Naive thymus-derived CD8-positive, alpha-beta T cell (primary cell): ENCODE measurements at regions of chr20 and their contacts with region 1.

Region 1: GRCh38 chr20:35954200-35954906 is at the start of gene SCAND1:
- DNase-seq: peak; percentile 93 to 99 (median 97)
- ATAC-seq: peak; percentile 86
- H3K4me3 Mint-ChIP-seq: peak within 1 kb of the TSS; percentile 89 to 100 (median 99)
- H3K27ac Mint-ChIP-seq: peak within 1 kb of the TSS; percentile 94 to 100 (median 99)
- H3K4me1 Mint-ChIP-seq: peaks cover 6 to 31% (median 26%) of the 10 kb centered on the region in 4 donors
- H3K27me3 Mint-ChIP-seq: no peaks in the 10 kb centered on the region
- polyA plus RNA-seq, gene SCAND1: 156 to 206 (median 176) TPM

Region 2: GRCh38 chr20:35454881-35455609 is 499.3 kb before region 1 on chr20 and contains the start of gene CEP250:
- POLR2A ChIA-PET with region 1: interaction called, 19 read pairs
- DNase-seq: peak; percentile 91 to 98 (median 96)
- ATAC-seq: peak; percentile 93 to 94
- H3K4me3 Mint-ChIP-seq: peak within 1 kb of the TSS; percentile 88 to 98 (median 95)
- H3K27ac Mint-ChIP-seq: peak within 1 kb of the TSS; percentile 87 to 100 (median 98)
- H3K4me1 Mint-ChIP-seq: peaks cover 0 to 33% (median 21%) of the 10 kb centered on the region in 4 donors
- H3K27me3 Mint-ChIP-seq: no peaks in the 10 kb centered on the region
- polyA plus RNA-seq, gene CEP250: 4.5 to 17.5 (median 6.0) TPM

Region 3: GRCh38 chr20:35541783-35542588 is 412.4 kb before region 1 on chr20 and contains the start of gene ERGIC3:
- POLR2A ChIA-PET with region 1: interaction called, 13 read pairs
- DNase-seq: peak; percentile 92 to 98 (median 96)
- ATAC-seq: peak; percentile 96
- H3K4me3 Mint-ChIP-seq: peak within 1 kb of the TSS; percentile 82 to 97 (median 92)
- H3K27ac Mint-ChIP-seq: peak within 1 kb of the TSS; percentile 70 to 96 (median 91)
- H3K4me1 Mint-ChIP-seq: peaks cover 10 to 28% (median 24%) of the 10 kb centered on the region in 4 donors
- H3K27me3 Mint-ChIP-seq: peaks cover 0 to 2% (median 0%) of the 10 kb centered on the region in 5 donors
- polyA plus RNA-seq, gene ERGIC3: 129 to 150 (median 149) TPM

Region 4: GRCh38 chr20:35664544-35665221 is 289.7 kb before region 1 on chr20 and contains the starts of genes CPNE1 and RBM12:
- POLR2A ChIA-PET with region 1: interaction called, 22 read pairs
- DNase-seq: peak; percentile 87 to 97 (median 94)
- ATAC-seq: peak; percentile 77 to 78
- H3K4me3 Mint-ChIP-seq: peak within 1 kb of the TSS; percentile 89 to 98 (median 96)
- H3K27ac Mint-ChIP-seq: peak within 1 kb of the TSS; percentile 96 to 100 (median 99)
- H3K4me1 Mint-ChIP-seq: peaks cover 10 to 55% (median 47%) of the 10 kb centered on the region in 4 donors
- H3K27me3 Mint-ChIP-seq: no peaks in the 10 kb centered on the region
- polyA plus RNA-seq, gene CPNE1: 329 to 392 (median 384) TPM
- polyA plus RNA-seq, gene RBM12: 35.2 to 43.7 (median 39.9) TPM

Region 5: DNA sequence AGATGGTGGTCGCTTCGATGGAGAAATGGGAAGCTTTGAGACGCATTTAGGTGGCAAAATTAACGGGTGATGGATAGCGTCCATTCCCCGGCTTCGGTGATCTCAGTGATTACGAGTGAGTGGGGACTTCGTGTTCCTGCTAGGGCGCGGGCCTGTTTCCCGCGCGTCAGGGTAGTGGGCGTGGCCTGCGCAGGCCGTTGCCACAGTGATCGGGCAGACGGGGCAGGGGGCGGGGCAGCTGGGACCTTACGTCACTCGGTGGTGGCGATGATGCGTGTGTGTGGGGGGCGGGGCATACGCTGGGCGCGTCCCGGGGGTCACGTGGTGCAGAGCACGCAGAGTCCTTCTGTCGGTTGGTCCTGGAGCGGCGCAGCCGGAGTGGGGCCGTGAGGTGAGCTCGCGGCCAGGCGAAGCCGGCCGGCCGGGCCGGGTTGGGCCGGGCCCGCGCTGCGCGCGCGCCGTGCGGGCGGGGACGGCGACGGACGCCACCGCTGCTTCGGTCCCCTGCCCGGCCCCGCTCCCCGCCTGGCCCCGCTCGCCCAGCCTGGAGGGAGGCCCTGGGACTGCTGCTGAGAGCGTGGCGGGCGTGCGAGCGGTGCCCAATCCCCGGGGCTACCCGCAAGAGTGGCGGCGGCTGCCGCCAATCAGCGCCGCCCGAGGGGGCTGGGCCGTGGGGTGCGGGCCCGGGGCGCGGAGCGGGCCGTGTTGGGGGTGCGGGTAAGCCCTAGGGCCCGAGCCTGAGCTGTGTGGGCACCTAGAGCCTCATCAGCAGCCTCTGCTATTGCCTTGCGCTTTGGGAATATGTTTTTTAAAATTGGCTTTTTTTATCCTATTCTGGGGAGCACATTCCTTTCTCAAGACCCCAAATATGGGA is 182.4 kb before region 1 on chr20 and contains the start of gene PHF20:
- POLR2A ChIA-PET with region 1: interaction called, 17 read pairs
- DNase-seq: peak; percentile 99 to 100 (median 100)
- ATAC-seq: peak; percentile 81 to 87
- H3K4me3 Mint-ChIP-seq: peak within 1 kb of the TSS; percentile 84 to 98 (median 93)
- H3K27ac Mint-ChIP-seq: peak within 1 kb of the TSS; percentile 98 to 100 (median 100)
- H3K4me1 Mint-ChIP-seq: peaks cover 45 to 91% (median 75%) of the 10 kb centered on the region in 4 donors
- H3K27me3 Mint-ChIP-seq: no peaks in the 10 kb centered on the region
- polyA plus RNA-seq, gene PHF20: 114 to 135 (median 125) TPM

Region 6: DNA sequence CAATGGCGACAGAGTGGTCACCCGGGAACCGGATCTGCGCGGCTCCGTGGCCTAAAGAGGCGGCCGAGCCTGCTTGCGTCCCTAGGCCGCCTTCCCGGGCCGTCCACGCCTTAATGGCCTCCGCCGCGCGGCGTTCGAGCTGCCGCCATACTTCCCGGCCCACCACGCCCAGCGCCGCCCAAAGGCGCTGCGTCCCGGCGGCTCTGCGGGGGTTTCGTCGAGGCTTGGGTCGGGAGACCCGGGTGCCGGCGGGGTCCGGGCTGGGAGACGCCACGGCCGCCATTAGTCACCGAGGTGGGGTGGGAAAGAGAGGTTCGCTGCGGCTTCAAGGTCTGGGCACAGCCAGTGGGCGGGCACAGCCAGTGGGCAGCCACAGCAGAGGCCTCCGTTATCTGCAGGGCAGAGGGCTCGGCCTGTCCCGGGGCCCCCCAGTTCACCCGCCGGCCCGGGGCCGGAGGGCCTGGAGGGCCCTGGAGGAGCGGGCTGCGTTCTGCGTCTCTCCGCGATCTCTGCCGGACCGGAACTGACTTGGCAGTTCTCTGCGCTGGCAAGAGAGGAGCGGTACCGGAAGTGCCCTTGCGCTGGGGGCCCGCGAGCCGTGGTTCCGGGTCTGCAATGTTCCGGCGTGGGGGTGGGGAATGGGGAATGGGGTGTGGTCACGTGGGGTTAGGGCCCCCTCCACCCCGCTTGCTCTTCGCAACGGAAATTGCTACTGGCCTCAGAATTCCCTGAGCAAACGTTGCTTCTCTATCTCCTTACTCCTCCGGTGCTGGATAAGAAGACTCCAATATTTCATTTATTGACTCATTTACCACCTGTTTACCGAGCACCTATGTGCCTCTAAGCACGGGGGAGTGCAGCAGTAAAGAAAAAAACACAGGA is 96.3 kb after region 1 on chr20:
- POLR2A ChIA-PET with region 1: interaction called, 19 read pairs
- DNase-seq: peak; percentile 74 to 94 (median 83)
- ATAC-seq: peak; percentile 94 to 97
- H3K4me3 Mint-ChIP-seq: peak overlapping the region; percentile 87 to 97 (median 92)
- H3K27ac Mint-ChIP-seq: peak overlapping the region; percentile 83 to 97 (median 93)
- H3K4me1 Mint-ChIP-seq: peaks cover 20 to 53% (median 49%) of the 10 kb centered on the region in 4 donors
- H3K27me3 Mint-ChIP-seq: peaks cover 0 to 7% (median 2%) of the 10 kb centered on the region in 5 donors